Naive thymus-derived CD4-positive, alpha-beta T cell (primary cell): ENCODE measurements at regions of chr14 and their contacts with region 1.

Region 1: GRCh38 chr14:74881431-74882361 is at the start of gene DLST:
- DNase-seq: peak; percentile 74 to 94 (median 81)
- ATAC-seq: peak; percentile 91
- H3K4me3 ChIP-seq: peak within 1 kb of the TSS; percentile 77
- H3K4me3 Mint-ChIP-seq: peak within 1 kb of the TSS; percentile 94 to 100 (median 98)
- H3K27ac ChIP-seq: peak within 1 kb of the TSS; percentile 91
- H3K27ac Mint-ChIP-seq: peak within 1 kb of the TSS; percentile 96 to 100 (median 99)
- H3K4me1 ChIP-seq: peaks cover 30 to 34% of the 10 kb centered on the region in 2 donors
- H3K4me1 Mint-ChIP-seq: peaks cover 49 to 82% (median 72%) of the 10 kb centered on the region in 7 donors
- H3K27me3 ChIP-seq: no peaks in the 10 kb centered on the region
- H3K27me3 Mint-ChIP-seq: no peaks in the 10 kb centered on the region
- total RNA-seq, gene DLST: 90.0 to 132 (median 96.5) TPM

Region 2: DNA sequence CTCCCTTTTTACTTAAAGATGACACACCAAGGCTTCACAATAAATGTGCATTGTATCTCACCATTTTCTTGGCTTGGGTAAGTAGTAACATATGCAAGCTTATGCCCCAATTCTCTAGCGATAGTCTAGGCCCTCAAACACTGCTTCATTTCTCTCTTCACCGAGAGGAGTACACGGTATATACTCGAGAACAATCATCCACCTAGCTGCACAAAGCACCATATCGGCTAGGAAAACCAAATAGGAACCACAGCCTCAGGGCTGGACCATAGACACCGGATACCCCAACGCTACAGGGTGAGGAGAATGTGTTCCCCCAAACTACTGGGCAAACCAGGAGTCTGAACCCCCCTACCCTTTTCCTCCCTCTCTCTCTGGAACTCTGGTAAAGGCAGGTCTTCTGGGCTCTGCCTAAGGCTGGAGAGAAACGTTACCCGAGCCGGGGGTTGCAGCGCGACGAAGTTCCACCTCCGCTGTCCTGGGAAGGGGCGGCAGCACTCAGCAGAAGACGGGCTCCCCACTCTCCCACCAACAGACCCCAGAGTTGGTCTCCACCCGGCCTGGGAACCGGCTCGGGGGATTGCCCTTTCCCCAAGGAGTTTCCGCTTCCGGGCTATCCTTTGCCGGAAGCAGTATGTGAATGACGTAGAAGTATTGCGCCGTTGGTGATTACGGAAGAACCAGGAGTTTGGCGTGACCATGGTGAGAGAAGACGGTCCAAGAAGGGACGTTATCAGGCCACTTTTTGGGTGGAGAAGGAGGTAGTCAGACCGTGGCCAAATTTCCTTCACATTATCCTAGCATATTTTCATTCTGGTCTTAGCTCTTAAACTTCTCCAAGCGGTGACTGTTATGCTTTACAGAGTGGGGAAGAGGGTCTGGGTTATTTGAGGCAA is 168.9 kb before region 1 on chr14 and contains the starts of genes AREL1 and FCF1:
- CTCF ChIA-PET with region 1: no interaction called
- POLR2A ChIA-PET with region 1: no interaction called
- intact Hi-C with region 1: loop called in 1 of 2 experiments (anchors 5 kb)
- DNase-seq: peak; percentile 53 to 87 (median 82)
- ATAC-seq: peak; percentile 96
- H3K4me3 ChIP-seq: peak within 1 kb of the TSS; percentile 75
- H3K4me3 Mint-ChIP-seq: peak within 1 kb of the TSS; percentile 93 to 100 (median 97)
- H3K27ac ChIP-seq: peak within 1 kb of the TSS; percentile 96
- H3K27ac Mint-ChIP-seq: peak within 1 kb of the TSS; percentile 95 to 100 (median 98)
- H3K4me1 ChIP-seq: peaks cover 9 to 24% of the 10 kb centered on the region in 2 donors
- H3K4me1 Mint-ChIP-seq: peaks cover 33 to 79% (median 66%) of the 10 kb centered on the region in 7 donors
- H3K27me3 ChIP-seq: no peaks in the 10 kb centered on the region
- H3K27me3 Mint-ChIP-seq: no peaks in the 10 kb centered on the region
- total RNA-seq, gene AREL1: 35.6 to 52.0 (median 43.5) TPM
- total RNA-seq, gene FCF1: 36.5 to 66.6 (median 60.8) TPM

Region 3: DNA sequence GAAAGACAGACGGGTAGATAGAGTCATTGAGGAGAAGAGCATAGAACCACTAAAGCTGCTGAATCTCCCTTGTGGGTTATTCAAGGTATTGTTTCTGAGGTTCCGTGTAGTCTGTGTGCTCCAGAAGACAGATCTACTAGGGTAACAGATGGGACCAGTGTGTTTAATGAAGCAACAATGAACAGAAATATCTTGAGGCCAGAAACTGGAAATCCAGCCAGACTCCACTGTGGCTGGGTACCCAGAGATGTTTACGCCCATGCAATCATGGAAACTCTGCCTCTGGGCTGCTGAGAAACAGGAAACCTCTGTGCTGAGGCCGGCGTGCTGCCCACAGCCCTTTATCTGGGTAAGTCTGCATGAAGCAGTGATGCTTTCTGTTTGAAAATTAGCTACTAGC is 14.0 kb before region 1 on chr14:
- CTCF ChIA-PET with region 1: interaction called, 68 read pairs
- POLR2A ChIA-PET with region 1: interaction called, 52 read pairs
- intact Hi-C with region 1: loop called in 1 of 2 experiments (anchors 2 kb)
- DNase-seq: peak in 6 of 9 donors; percentile 32 to 51 (median 37)
- ATAC-seq: peak; percentile 87
- H3K4me3 ChIP-seq: peak overlapping the region; percentile 27
- H3K4me3 Mint-ChIP-seq: peak overlapping the region; percentile 0 to 60 (median 39)
- H3K27ac ChIP-seq: peak overlapping the region; percentile 40
- H3K27ac Mint-ChIP-seq: peak overlapping the region in 7 of 9 donors; percentile 4 to 77 (median 45)
- H3K4me1 ChIP-seq: peaks cover 11 to 15% of the 10 kb centered on the region in 2 donors
- H3K4me1 Mint-ChIP-seq: peaks cover 17 to 31% (median 24%) of the 10 kb centered on the region in 7 donors
- H3K27me3 ChIP-seq: no peaks in the 10 kb centered on the region
- H3K27me3 Mint-ChIP-seq: peaks cover 0 to 2% (median 0%) of the 10 kb centered on the region in 5 donors

Region 4: GRCh38 chr14:74898694-74899093 is 17.0 kb after region 1 on chr14:
- CTCF ChIA-PET with region 1: interaction called, 4 read pairs
- POLR2A ChIA-PET with region 1: interaction called, 20 read pairs
- intact Hi-C with region 1: no loop called
- DNase-seq: no peak
- ATAC-seq: no peak
- H3K4me3 ChIP-seq: no peak overlapping the region
- H3K4me3 Mint-ChIP-seq: no peak overlapping the region
- H3K27ac ChIP-seq: no peak overlapping the region
- H3K27ac Mint-ChIP-seq: peak overlapping the region in 5 of 9 donors; percentile 4 to 56 (median 49)
- H3K4me1 ChIP-seq: no peaks in the 10 kb centered on the region
- H3K4me1 Mint-ChIP-seq: peaks cover 0 to 12% (median 0%) of the 10 kb centered on the region in 7 donors
- H3K27me3 ChIP-seq: no peaks in the 10 kb centered on the region
- H3K27me3 Mint-ChIP-seq: no peaks in the 10 kb centered on the region

Region 5: DNA sequence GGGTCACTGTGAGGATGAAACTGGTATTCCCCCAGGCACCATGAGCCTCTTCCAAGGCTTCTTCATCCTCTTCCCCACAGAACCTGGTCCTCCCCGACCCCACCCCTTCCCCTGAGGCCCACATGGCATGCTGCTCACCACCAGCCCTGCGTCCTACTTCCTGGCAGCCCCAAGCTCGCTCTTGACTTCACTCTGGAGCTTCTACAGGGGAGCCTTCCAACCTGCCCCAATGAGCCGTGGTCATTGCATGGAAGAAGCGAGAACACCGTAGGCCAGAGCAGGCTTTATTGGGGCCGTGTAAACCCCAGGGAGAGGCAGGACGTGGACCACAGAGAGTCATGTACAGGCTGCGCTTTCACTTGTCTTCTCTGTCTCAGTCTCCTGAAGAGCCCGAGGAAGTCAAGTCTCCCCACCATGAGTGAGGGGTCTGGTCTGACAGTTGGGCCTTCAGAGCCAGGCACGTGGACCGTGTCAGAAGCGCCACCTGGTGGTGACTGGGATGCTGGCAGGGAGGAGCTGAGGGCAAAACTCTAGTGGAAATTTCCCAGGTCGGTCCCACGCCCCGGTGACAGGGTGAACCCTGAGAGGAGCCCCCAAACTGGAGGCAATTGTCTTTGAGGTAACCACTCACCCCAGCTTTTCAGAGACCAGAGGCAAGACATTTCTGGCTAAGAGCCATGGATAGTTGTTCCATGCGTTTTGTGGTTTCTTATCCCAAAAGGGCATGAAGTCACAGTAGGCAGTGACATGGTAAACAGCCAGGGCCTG is 23.9 kb after region 1 on chr14:
- CTCF ChIA-PET with region 1: interaction called, 50 read pairs
- POLR2A ChIA-PET with region 1: interaction called, 8 read pairs
- intact Hi-C with region 1: loop called (anchors 1 kb)
- DNase-seq: peak; percentile 56 to 83 (median 71)
- ATAC-seq: peak; percentile 76
- H3K4me3 ChIP-seq: no peak overlapping the region
- H3K4me3 Mint-ChIP-seq: no peak overlapping the region
- H3K27ac ChIP-seq: peak overlapping the region; percentile 38
- H3K27ac Mint-ChIP-seq: peak overlapping the region in 5 of 9 donors; percentile 48 to 81 (median 77)
- H3K4me1 ChIP-seq: peaks cover 0 to 6% of the 10 kb centered on the region in 2 donors
- H3K4me1 Mint-ChIP-seq: peaks cover 0 to 23% (median 4%) of the 10 kb centered on the region in 7 donors
- H3K27me3 ChIP-seq: no peaks in the 10 kb centered on the region
- H3K27me3 Mint-ChIP-seq: no peaks in the 10 kb centered on the region

Region 6: GRCh38 chr14:74922739-74923401 is 41.2 kb after region 1 on chr14 and contains the start of gene RPS6KL1:
- CTCF ChIA-PET with region 1: no interaction called
- POLR2A ChIA-PET with region 1: interaction called, 4 read pairs
- intact Hi-C with region 1: loop called in 1 of 2 experiments (anchors 1 kb)
- DNase-seq: peak; percentile 58 to 76 (median 69)
- ATAC-seq: peak; percentile 98
- H3K4me3 ChIP-seq: peak within 1 kb of the TSS; percentile 47
- H3K4me3 Mint-ChIP-seq: peak within 1 kb of the TSS; percentile 54 to 86 (median 68)
- H3K27ac ChIP-seq: peak within 1 kb of the TSS; percentile 77
- H3K27ac Mint-ChIP-seq: peak within 1 kb of the TSS in 8 of 9 donors; percentile 6 to 78 (median 60)
- H3K4me1 ChIP-seq: peaks cover 0 to 3% of the 10 kb centered on the region in 2 donors
- H3K4me1 Mint-ChIP-seq: peaks cover 0 to 16% (median 13%) of the 10 kb centered on the region in 7 donors
- H3K27me3 ChIP-seq: no peaks in the 10 kb centered on the region
- H3K27me3 Mint-ChIP-seq: peaks cover 0 to 19% (median 8%) of the 10 kb centered on the region in 5 donors
- total RNA-seq, gene RPS6KL1: 3.0 to 12.8 (median 6.3) TPM